ENCODE measurements at regions of chrX and their contacts with region 1.

Region 1: DNA sequence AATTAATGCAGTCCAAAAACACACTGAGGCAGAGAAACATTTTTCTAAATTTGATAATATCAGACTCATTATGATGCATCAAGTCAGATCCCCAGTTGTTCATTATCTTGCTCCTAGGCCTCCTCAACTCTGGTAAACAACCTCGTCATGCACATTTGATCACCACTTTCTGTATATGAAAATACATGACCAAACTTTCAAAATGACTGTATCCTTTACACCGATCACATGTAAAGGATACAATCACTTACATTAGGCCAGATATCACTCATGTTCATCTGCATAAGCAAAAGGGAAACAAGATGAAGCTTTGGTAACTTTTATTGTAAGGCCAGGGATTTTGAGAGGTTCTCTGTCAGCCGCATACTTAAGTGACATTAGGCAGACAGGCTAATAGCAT is 99.4 kb upstream of the IL1RAPL1 start:
- DNase-seq: no peak
- H3K4me3 ChIP-seq: no peak overlapping the region
- H3K27ac ChIP-seq: no peak overlapping the region
- H3K4me1 ChIP-seq: no peaks in the 10 kb centered on the region
- H3K27me3 ChIP-seq: no peaks in the 10 kb centered on the region
- CTCF ChIP-seq: no peak
- POLR2A ChIP-seq: no peak

Region 2: GRCh38 chrX:27767387-27767786 is 720.4 kb before region 1 on chrX:
- intact Hi-C with region 1: loop called (anchors 10 kb)
- DNase-seq: no peak
- H3K4me3 ChIP-seq: no peak overlapping the region
- H3K27ac ChIP-seq: no peak overlapping the region
- H3K4me1 ChIP-seq: no peaks in the 10 kb centered on the region
- H3K27me3 ChIP-seq: peaks cover 0 to 18% of the 10 kb centered on the region in 2 donors
- CTCF ChIP-seq: no peak
- POLR2A ChIP-seq: no peak

Region 3: GRCh38 chrX:28408017-28408723 is 79.6 kb before region 1 on chrX:
- intact Hi-C with region 1: loop called (anchors 10 kb)
- DNase-seq: no peak
- H3K4me3 ChIP-seq: no peak overlapping the region
- H3K27ac ChIP-seq: no peak overlapping the region
- H3K4me1 ChIP-seq: no peaks in the 10 kb centered on the region
- H3K27me3 ChIP-seq: peaks cover 0 to 3% of the 10 kb centered on the region in 2 donors
- CTCF ChIP-seq: no peak
- POLR2A ChIP-seq: no peak